ENCODE measurements at regions of chr5 and their contacts with region 1.

Region 1: DNA sequence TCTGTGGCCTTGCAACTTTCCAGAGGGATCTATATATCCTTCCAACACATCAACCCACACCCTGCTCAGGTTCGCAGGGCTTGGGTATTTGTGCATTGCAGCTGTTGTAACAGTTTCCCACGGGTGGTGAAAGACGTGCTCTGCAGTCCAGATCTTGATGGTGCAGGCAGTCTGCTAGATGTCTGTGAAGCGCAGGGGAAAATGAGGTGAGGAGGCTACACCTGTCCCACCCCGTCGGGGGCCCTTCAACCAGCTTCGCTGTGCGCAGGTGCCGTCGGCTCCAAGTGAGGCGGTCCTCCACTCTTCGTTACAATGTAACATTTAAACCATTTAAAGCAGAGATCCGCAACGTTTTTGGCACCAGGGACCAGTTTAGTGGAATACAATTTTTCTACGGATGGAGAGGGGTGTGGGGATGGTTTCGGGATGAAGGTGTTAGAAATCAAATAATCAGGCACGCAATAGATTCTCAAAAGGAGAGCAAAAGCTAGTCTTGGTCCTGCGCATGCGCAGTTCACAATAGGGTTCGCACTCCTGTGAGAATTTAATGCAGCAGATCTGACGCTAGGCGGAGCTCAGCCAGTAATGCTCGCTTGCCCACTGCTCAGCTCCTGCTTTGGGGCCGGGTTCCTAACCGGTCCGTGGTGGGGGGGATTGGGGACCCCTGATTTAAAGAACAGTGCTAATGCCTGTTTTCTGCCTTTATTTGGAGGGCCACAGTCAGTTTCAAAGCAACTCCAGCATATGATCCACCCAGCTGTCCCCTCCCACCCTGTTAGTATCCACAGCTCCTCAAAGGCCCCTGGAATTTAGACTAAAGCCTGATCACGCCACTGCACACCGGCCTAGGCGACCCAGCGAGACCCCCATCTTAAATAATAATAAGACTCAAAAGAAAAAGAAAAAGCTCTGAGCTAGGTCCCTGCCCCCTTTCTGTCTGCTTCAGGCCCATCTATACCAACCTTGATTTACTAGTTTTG is 97.1 kb upstream of the SELENOP start:
- DNase-seq: peak; percentile 16
- H3K4me3 ChIP-seq: peak overlapping the region; percentile 62
- CTCF ChIP-seq: peak; percentile 84

Region 2: DNA sequence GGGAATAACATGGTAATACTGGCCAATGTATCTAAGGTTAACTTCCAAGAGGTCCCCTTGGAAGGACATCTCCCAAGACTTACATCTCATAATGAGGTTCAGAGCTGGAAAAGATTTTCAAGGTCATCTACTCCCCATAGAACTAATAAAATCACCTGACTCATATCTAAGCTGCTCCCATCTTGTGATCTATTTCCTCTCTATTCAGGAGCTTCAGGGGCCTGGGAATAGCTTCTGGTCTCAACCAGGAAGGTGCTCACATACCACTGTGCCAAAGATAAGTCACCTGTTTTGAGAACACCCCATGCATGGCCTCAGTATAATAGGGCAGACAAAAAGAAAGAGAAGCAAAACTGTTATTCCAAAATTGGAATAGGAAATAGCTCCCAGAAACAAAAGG is 1112.7 kb before region 1 on chr5:
- CTCF ChIA-PET with region 1: no interaction called
- POLR2A ChIA-PET with region 1: no interaction called
- DNase-seq: no peak
- H3K4me3 ChIP-seq: no peak overlapping the region
- CTCF ChIP-seq: no peak

Region 3: DNA sequence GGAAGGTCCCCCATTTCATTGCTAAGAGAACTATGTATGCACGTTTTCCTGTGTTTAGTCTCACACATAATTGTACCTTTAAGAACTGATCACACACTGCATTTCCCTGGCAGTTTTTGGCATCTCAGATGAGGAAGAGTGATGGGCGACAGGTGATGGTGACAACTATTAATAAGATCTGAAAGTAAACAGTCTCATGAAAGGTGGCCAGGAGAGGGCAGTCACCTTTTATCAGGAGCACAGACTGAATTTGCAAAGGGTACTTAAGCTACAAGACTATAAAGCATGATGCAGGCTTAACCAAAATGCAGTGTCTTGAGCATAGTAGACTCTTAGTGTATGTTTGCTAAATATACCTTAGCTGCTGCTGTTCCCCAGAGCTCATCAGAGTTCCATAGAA is 394.0 kb before region 1 on chr5:
- CTCF ChIA-PET with region 1: no interaction called
- POLR2A ChIA-PET with region 1: no interaction called
- DNase-seq: no peak
- H3K4me3 ChIP-seq: no peak overlapping the region
- CTCF ChIP-seq: no peak

Region 4: GRCh38 chr5:42656651-42657015 is 252.2 kb before region 1 on chr5:
- CTCF ChIA-PET with region 1: no interaction called
- POLR2A ChIA-PET with region 1: no interaction called
- DNase-seq: no peak
- H3K4me3 ChIP-seq: no peak overlapping the region; the same call in 1 of the 2 replicates
- CTCF ChIP-seq: no peak

Region 5: GRCh38 chr5:42870882-42871418 is 37.8 kb before region 1 on chr5:
- CTCF ChIA-PET with region 1: no interaction called
- POLR2A ChIA-PET with region 1: no interaction called
- DNase-seq: no peak
- H3K4me3 ChIP-seq: no peak overlapping the region
- CTCF ChIP-seq: no peak

Region 6: DNA sequence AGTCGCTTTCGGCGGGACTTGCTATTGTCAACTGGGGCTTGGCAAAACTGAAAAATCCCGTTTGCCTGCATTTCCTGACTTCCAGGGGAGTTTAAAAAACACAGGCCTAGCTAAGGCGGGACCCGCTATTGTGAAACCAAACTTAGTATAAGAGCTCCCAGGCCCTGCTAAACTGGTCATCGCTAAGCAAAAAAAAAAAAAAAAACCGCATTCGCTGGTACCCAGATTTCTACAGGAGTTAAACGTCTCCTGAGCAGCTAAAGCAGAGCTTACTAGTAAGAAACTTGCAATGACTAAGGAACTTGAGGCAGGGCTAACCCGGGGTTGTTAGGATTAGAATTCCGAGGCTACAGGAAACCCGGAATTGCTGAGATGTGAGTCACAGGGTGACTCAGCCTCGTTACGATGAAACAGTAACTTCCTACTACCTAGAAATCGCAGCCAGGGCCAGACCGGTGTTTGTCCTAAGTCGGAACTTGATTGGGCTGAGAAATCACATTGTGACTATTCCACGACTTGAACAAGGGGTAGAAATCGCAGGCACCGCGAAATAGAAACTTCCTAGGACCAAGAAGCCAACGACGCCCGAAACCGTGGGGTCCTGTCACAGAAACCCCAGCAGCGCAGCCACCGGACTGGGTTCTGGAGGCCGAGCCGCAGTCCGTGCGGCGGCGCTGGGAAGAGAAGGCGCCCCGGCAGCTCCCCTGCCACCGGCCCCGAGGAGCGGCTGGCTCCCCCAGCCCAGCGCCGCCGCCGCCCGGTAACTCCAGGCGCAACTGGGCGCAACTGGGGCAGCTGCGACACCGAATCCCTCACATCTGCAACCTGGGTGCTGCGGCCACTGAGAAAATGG is 41.9 kb after region 1 on chr5:
- CTCF ChIA-PET with region 1: interaction called, 52 read pairs
- POLR2A ChIA-PET with region 1: no interaction called
- DNase-seq: peak; percentile 99
- H3K4me3 ChIP-seq: peak overlapping the region; percentile 64
- CTCF ChIP-seq: no peak

Region 7: DNA sequence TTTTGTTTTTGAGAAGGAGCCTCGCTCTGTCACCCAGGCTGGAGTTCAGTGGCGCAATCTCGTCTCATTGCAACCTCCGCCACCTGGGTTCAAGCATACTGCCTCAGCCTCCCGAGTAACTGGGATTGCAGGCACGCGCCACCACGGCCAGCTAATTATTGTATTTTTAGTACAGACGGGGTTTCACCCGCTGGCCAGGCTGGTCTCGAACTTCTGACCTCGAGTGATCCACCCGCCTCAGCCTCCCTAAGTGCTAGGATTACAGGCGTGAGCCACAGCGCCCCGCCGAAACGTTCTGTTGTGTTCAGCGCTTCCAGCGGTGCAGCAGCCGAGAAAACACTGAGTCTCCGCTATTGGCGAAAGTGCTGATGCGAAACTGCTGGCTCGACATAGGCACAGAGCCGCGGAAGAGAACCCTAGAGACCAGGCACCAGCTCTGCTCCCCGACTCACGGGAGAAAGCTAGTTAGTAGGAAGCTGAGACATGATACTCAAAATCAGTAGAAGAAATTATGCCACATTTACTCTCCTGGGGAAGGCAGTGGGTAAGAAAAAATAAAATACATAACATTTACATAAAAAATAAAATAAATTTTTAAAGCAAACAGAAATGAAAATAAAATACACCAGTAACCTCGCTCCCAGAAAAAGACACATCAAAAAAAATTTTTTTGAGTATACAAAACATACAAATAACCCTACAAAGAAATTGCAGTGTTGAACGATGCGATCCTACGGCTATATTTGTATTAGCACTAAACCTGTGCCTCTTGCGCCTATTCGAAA is 99.8 kb after region 1 on chr5:
- CTCF ChIA-PET with region 1: interaction called, 24 read pairs
- POLR2A ChIA-PET with region 1: no interaction called
- DNase-seq: no peak
- H3K4me3 ChIP-seq: peak overlapping the region; percentile 57
- CTCF ChIP-seq: no peak

Region 8: DNA sequence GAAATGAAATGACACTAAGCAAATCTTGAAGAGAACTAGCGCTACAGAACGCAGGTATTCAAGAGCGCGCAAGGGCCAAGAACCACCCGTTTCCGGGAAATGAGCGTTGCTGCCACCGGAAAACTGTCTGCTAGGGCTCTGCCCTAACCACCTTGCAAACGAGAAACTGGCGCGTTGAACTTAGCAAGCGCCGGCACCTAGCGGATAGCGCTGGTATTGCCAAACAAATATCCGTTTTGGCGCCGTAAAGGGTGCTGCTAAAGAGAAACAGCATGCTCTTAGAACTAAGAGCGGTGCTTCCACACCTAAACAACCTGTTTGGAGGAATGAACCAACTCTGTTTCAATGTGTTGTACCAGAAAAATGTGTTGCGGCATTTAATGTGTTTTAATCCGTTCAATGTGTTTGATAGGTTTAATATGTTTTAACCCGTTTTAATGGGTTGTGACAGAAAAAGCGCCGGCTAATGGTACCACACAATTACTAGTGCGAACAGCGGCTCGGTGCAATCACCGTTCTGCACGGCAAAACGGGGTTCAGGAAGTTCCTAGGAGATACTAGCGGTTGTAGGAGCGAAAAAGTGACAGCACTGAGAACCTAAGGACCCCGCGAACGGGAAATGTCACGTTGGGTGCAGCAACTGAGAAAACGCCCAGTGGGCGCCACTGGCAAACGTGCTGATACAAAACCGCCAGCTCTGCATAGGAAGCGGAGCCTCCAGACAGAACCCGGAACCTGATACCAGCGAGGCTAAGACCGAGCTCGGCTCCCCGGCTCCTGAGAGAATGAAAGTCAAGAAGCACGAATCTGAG is 131.7 kb after region 1 on chr5 and contains the start of gene ANXA2R:
- CTCF ChIA-PET with region 1: interaction called, 127 read pairs
- POLR2A ChIA-PET with region 1: interaction called, 5 read pairs
- DNase-seq: peak; percentile 84
- H3K4me3 ChIP-seq: peak within 1 kb of the TSS; percentile 72
- CTCF ChIP-seq: peak; percentile 80

Region 9: GRCh38 chr5:43105369-43106289 is 196.8 kb after region 1 on chr5:
- CTCF ChIA-PET with region 1: interaction called, 54 read pairs
- POLR2A ChIA-PET with region 1: no interaction called
- DNase-seq: peak; percentile 77
- H3K4me3 ChIP-seq: peak overlapping the region; percentile 55
- CTCF ChIP-seq: peak; percentile 100

Measured in AG04449 (cell line).